Right ventricle myocardium superior (tissue), 1 donor: ENCODE measurements at regions of chr7 and their contacts with region 1.

Region 1: GRCh38 chr7:135672560-135673359 is 10.4 kb downstream of the STMP1 start:
- DNase-seq: no peak
- ATAC-seq: peak; percentile 81

Region 2: GRCh38 chr7:135791543-135792362 is 119.0 kb after region 1 on chr7:
- intact Hi-C with region 1: loop called (anchors 5 kb)
- DNase-seq: no peak
- ATAC-seq: no peak